ENCODE measurements at regions of chr14 and their contacts with region 1.

Region 1: GRCh38 chr14:72893636-72894321 is at the start of gene DPF3:
- DNase-seq: peak; percentile 96
- total RNA-seq, gene DPF3: 36.5 TPM

Region 2: GRCh38 chr14:72715215-72715849 is 178.4 kb before region 1 on chr14:
- intact Hi-C with region 1: loop called (anchors 1 kb)
- DNase-seq: peak; percentile 82

Region 3: DNA sequence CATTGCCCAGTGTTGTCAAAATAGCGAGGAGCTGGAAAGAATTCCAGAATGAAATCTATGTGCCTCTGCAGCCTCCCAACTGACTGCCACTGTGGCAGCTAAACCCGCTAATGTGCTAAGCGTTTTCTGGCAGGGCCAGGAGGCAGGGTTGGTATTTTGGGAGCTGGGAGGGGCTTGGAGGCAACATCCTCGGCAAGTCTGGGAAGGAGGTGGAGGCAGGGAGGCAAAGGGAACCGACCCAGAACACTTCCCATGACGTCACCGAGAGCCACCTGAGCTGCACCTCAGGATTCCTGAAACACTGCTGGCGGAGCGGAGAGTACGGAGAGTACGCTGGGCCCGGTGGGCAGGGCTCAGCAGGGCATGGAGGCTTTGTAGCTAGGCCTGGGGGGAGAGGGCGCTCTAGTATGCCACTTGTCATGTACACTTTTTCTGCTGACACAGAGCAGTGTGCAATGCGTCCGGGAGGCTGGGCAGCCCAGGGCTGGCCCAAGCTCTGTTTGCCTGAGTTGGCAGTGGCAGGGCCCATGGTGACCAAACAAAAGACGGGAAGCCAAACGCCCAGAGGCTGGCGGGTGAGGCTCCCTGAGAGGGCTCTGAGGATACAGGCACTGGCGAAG is 81.4 kb before region 1 on chr14:
- intact Hi-C with region 1: loop called (anchors 2 kb)
- DNase-seq: peak; percentile 87

Region 4: DNA sequence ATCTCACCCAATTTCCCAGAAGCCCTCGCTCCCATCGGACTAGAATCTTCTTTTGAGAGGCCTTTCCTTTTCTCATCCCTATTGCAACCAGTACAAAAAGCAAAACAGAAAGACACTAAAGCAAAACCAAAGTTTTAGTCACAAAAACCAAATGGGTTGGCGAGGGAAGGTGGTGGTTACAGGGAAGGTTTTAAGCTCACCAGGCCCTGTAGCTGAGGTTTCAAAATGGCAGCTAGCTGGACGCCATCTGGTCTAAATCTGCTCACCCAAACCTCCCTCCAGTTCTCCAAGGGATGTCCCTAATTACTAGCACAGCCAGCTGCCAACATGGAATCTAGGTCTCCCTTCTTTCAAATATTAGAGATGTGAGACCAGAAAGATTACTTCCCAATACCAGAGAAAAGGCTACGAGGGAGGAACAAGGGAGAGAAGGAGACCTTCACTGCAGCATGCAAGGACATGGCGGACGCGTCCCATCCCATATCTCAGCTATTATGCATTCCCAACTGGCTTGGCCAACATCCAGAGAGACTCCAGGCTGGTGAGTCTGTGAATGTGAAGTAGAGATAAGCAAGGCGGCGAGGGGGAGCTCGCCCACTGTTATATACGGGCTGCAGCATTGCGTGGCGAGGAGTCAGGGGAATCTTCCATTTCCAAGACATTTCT is 70.7 kb before region 1 on chr14:
- intact Hi-C with region 1: loop called (anchors 2 kb)
- DNase-seq: no peak

Region 5: DNA sequence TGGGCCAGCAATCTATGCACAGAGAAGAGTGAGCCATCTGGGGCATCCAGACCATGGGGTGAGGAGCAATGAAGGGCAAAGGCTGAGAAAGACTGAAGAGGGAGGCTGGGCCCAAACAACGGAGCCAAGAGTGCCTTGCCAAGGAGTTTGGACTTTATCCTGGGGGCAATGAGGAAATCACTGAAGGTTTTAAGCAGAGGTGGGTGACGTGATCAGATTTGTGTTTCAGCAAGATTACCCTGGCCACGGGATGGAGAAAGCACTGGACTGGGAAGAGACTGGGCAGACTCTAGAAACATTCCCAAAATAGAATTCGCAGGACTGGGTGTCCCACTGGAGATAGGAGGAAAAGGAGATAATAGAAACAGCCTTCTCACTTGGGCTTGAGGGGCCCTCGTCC is 65.2 kb before region 1 on chr14:
- intact Hi-C with region 1: loop called (anchors 2 kb)
- DNase-seq: peak; percentile 63

Measured in cardiac septum (tissue), 1 donor.